Mammary epithelial cell (primary cell): ENCODE measurements at regions of chr10 and their contacts with region 1.

Region 1: DNA sequence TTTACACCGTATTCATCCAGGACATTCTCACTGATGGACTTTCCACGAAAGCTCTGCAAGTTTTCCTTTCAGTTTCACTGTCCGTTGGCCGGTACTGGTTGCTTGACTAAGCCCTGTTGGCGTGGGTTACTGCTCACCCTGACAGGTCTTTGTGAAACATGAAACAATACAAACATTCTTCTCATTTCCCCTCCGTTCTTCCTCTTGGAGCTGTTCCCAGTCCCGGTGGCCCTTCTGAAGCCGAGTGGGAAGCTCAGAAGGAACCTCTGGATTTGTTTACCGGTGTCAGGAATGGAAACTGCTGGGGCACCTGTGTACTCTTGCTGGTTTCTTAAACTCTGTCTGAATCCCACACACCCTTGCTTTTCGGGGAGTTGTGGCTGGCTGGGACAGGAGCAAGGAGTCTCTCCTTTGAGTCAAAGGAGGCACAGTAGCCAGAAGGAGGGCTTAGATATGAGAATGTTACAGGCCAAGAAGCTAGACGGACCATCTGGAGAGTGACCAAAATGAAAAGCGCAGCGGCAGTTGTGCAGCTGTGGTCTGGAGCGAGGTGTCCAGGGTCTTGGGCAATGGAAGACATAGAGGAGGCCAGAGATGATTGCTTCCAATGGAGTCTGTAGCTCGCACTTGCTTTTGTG is 45.7 kb downstream of the LYZL2 start:
- DNase-seq: peak; percentile 94
- H3K4me3 ChIP-seq: peak overlapping the region; percentile 25 to 46 (median 27)
- H3K27ac ChIP-seq: peak overlapping the region; percentile 50
- H3K4me1 ChIP-seq: peaks cover 6% of the 10 kb centered on the region
- H3K27me3 ChIP-seq: no peaks in the 10 kb centered on the region
- CTCF ChIP-seq: no peak

Region 2: DNA sequence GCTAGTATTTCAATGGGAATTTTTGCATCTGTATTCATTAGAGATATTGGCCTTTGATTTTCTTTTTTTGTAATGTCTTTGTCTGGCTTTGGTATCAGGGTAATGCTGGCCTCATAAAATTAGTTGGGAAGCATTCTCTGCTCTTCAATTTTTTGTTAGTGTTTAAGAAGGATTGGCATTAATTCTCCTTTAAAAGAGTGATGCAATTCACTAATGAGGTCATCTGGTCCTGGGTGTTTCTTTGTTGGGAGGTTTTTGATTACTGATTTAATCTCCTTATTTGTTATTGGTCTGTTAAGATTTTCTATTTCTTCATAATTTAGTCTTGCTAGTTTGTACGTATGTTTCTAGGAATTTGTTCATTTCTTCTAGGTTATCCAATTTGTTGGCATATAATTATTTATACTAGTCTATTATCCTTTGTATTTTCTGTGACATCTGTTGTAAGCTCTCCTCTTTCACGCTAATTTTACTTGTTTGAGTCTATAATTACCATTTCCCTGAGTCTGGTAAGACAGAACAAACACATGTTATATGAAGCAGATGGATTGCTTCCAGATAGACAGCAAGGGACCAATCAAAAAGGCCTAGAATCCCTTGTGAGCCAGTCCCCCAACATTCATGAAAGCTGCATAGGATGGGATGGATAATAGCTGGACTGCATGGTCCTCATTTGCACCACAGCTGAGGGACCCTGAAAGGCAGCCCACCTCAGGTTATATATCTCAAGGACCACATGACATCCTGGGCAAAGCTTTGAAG is 289.2 kb before region 1 on chr10:
- CTCF ChIA-PET with region 1: no interaction called
- dilution Hi-C with region 1: no loop called
- in situ Hi-C with region 1: no loop called
- intact Hi-C with region 1: no loop called
- DNase-seq: no peak
- H3K4me3 ChIP-seq: no peak overlapping the region
- H3K27ac ChIP-seq: no peak overlapping the region
- H3K4me1 ChIP-seq: no peaks in the 10 kb centered on the region
- H3K27me3 ChIP-seq: no peaks in the 10 kb centered on the region
- CTCF ChIP-seq: no peak

Region 3: GRCh38 chr10:30573721-30574431 is 10.0 kb before region 1 on chr10:
- CTCF ChIA-PET with region 1: interaction called, 35 read pairs
- dilution Hi-C with region 1: no loop called
- in situ Hi-C with region 1: no loop called
- intact Hi-C with region 1: no loop called
- DNase-seq: no peak
- H3K4me3 ChIP-seq: no peak overlapping the region
- H3K27ac ChIP-seq: no peak overlapping the region
- H3K4me1 ChIP-seq: no peaks in the 10 kb centered on the region
- H3K27me3 ChIP-seq: no peaks in the 10 kb centered on the region
- CTCF ChIP-seq: no peak

Region 4: DNA sequence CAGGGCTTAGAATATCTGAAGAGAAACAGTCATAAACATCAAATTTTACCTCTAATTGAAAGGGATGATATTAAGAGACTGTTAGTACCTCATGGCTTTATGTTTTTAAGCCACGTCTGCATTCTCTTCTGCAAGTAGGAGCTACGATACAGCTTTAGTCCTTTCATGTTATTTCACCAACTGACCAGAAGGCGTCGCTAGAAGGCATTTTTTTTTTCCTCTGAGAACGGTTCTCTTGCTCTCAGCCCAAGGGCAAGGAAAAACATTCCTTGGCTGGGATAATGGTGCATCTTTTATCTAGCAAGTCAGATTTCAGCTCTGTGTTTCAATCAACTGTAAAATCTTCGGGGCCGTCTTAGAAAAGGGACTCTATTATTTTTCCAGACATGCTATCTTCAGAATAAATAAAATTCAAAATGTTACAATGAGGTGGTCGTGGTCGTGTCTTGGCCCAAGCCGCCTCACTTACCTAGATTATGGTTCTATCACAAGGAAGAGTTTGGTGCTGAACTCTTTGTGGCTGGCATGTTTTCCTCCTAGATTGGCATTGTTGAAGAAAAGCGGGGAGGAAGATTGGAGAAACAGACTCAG is 87.2 kb after region 1 on chr10:
- CTCF ChIA-PET with region 1: interaction called, 24 read pairs
- dilution Hi-C with region 1: no loop called
- in situ Hi-C with region 1: no loop called
- intact Hi-C with region 1: no loop called
- DNase-seq: peak; percentile 57
- H3K4me3 ChIP-seq: peak overlapping the region in 2 of 3 experiments; percentile 29 to 46
- H3K27ac ChIP-seq: no peak overlapping the region
- H3K4me1 ChIP-seq: no peaks in the 10 kb centered on the region
- H3K27me3 ChIP-seq: peaks cover 3% of the 10 kb centered on the region
- CTCF ChIP-seq: peak; percentile 69 to 73